Left lung (tissue), 14 donors: ENCODE measurements at regions of chr17 and their contacts with region 1.

Region 1: GRCh38 chr17:43760254-43760852 is 1.8 kb upstream of the SOST start:
- DNase-seq: peak; percentile 81 to 93 (median 92)
- ATAC-seq: peak; percentile 99
- H3K4me3 ChIP-seq: no peak overlapping the region
- H3K27ac ChIP-seq: no peak overlapping the region
- H3K4me1 ChIP-seq: peaks cover 0 to 16% of the 10 kb centered on the region in 2 donors
- H3K27me3 ChIP-seq: peaks cover 16 to 34% of the 10 kb centered on the region in 2 donors
- CTCF ChIP-seq: peak; percentile 93 to 96

Region 2: GRCh38 chr17:43689814-43690213 is 70.5 kb before region 1 on chr17:
- intact Hi-C with region 1: loop called in 1 of 2 experiments (anchors 5 kb)
- DNase-seq: no peak
- ATAC-seq: no peak
- H3K4me3 ChIP-seq: no peak overlapping the region
- H3K27ac ChIP-seq: no peak overlapping the region
- H3K4me1 ChIP-seq: no peaks in the 10 kb centered on the region
- H3K27me3 ChIP-seq: no peaks in the 10 kb centered on the region
- CTCF ChIP-seq: no peak

Region 3: DNA sequence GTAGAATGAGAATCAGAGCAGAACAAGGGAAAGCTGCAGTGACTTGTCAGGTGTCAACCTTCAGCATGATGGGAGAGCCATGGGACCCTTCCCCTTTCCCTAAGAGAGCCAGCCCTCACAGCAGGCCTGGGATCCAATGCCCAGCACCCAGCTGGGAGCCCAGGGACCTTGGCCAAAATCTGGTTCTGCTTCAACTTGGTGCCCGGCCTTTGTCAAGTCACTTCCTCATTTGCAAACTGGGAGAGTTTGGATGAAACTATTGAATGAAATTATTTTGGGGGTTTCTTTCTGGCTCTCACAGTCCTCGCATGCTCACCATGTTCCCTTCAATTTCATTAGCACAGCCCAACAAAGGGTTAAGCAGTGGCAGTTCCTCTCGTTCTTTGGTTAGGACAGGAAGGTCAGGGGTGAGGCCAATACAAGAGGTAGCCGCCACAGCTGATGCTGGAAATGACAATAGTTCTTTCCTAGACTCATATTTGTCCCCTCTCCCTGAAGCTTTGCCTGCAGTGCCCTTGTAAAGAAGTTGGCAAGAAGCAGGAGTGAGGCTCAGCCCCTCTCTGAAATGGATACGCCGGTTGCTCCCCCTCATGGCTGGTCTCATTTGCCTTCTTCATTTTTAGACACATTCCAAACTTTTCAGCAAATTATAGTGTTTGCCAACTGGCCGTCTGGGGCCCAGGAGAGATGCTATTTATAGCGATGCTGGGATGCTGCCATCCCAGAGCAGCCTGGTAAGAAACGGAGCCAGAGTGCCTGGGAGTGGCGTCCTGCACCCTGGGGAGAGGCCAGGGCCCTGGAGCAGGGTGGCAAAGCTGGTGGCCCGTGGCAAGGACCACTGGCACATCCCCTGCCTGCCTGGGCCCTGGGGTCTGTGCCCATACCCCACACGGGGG is 64.1 kb before region 1 on chr17:
- intact Hi-C with region 1: loop called (anchors 2 to 5 kb)
- DNase-seq: peak in 1 of 4 donors; percentile 29
- ATAC-seq: no peak
- H3K4me3 ChIP-seq: no peak overlapping the region
- H3K27ac ChIP-seq: peak overlapping the region in 1 of 2 donors; percentile 23
- H3K4me1 ChIP-seq: peaks cover 10 to 13% of the 10 kb centered on the region in 2 donors
- H3K27me3 ChIP-seq: peaks cover 0 to 15% of the 10 kb centered on the region in 2 donors
- CTCF ChIP-seq: no peak